ENCODE measurements at regions of chr1 and their contacts with region 1.

Region 1: GRCh38 chr1:27010989-27011764 is 1.5 kb downstream of the TENT5B start:
- DNase-seq: peak; percentile 97
- ATAC-seq: peak; percentile 36
- H3K4me3 ChIP-seq: peak overlapping the region; percentile 60
- H3K27ac ChIP-seq: peak overlapping the region; percentile 90
- H3K4me1 ChIP-seq: peaks cover 54% of the 10 kb centered on the region
- H3K27me3 ChIP-seq: no peaks in the 10 kb centered on the region
- CTCF ChIP-seq: no peak

Region 2: DNA sequence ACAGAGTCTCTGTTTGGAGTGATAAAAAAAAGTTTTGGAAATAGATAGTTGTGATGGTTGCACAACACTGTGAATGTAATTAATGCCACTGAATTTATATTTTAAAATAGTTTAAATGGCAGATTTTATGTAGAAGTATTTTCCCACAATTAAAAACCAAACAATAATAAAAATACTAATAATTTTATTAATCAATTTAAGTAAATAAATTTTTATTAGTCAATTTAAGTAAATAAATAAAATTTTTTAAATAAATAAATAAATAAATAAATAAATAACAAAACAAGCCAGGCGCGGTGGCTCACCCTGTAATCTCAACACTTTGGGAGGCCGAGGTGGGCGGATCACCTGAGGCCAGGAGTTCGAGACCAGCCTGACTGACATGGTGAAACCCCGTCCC is 46.0 kb before region 1 on chr1:
- CTCF ChIA-PET with region 1: interaction called, 3 read pairs
- POLR2A ChIA-PET with region 1: no interaction called
- intact Hi-C with region 1: loop called (anchors 5 kb)
- DNase-seq: no peak
- ATAC-seq: no peak
- H3K4me3 ChIP-seq: no peak overlapping the region
- H3K27ac ChIP-seq: no peak overlapping the region
- H3K4me1 ChIP-seq: peaks cover 20% of the 10 kb centered on the region
- H3K27me3 ChIP-seq: no peaks in the 10 kb centered on the region
- CTCF ChIP-seq: no peak

Region 3: GRCh38 chr1:27031235-27032118 is 20.3 kb after region 1 on chr1:
- CTCF ChIA-PET with region 1: no interaction called
- POLR2A ChIA-PET with region 1: interaction called, 11 read pairs
- intact Hi-C with region 1: no loop called
- DNase-seq: peak; percentile 92
- ATAC-seq: peak; percentile 89
- H3K4me3 ChIP-seq: peak overlapping the region; percentile 60
- H3K27ac ChIP-seq: peak overlapping the region; percentile 93
- H3K4me1 ChIP-seq: peaks cover 16% of the 10 kb centered on the region
- H3K27me3 ChIP-seq: no peaks in the 10 kb centered on the region
- CTCF ChIP-seq: no peak

Region 4: DNA sequence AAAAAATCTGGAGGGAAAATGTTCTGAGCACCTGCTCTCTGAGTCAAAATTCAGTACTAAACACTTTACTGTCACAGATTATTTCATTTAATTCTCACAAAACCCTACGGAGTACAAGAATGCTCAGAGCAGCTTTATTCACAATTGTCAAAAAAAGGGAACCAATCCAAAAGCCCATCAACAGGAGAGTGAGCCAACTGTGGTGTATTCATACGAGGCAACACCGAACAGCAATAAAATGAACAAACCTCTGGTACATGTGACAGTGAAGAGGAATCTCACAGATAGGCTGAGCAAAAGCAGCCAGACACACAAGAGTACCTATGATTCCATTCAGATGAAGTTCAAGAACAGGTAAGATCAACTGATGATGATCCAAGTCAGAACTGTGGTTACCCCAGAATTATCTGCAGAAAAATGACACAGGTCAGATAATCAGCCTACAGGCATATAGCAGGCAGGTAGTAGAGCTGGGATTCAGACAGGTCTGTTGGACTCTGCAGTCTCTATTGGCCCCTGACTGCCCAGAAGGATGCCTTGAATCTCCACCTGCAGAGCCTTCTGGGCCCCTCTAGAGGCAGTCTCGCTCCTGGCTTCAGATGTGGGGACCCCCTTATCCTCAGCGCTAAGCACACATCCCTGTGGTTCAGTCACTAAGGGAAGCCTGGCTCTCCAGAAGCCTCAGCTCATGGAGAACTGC is 124.5 kb after region 1 on chr1:
- CTCF ChIA-PET with region 1: no interaction called
- POLR2A ChIA-PET with region 1: no interaction called
- intact Hi-C with region 1: no loop called
- DNase-seq: no peak
- ATAC-seq: peak; percentile 14; the same call in 1 of the 2 replicates
- H3K4me3 ChIP-seq: no peak overlapping the region
- H3K27ac ChIP-seq: no peak overlapping the region
- H3K4me1 ChIP-seq: peaks cover 28% of the 10 kb centered on the region
- H3K27me3 ChIP-seq: no peaks in the 10 kb centered on the region
- CTCF ChIP-seq: peak; percentile 43; the same call in 1 of the 2 replicates